PC-9 (cell line): ENCODE measurements at regions of chr11 and their contacts with region 1.

Region 1: DNA sequence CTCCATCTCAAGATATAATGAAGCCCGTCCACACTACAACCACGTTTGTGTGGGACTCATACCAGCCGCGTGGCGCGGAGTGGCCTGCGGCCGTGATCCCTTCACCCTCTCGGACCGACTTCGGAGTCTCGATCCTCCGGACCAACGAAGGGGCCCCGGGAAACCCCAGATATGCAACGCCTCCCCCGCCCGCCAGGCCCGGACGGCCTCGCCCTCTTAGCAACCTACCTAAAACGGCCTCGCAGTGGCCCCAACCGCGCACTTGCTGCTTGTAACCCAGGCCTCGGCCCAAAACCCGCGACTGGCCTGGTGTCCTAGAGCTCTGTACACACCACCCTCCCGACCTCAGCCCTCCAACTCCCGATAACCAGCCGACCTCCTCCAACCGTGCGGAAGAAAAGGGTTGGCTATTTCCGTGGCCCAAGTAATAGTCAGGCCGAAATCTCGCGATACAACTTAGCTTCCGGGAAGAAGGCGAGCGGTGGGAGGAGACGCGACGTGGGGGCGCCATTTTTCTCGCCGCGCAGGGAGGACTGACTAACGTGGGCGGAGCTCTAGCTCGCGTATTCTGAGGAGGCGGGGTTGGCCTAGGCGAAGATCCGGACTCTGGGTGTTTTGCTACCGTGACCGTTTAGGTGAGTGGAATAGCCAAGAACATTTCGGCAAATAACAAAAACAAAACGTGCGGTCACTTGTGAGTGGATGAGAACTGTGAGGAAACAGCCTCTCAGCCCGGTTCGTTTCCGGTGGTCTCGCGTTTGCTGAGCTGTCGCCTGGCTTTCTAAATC is at the starts of genes C11orf54 and TAF1D:
- DNase-seq: peak; percentile 95 to 98
- H3K4me3 ChIP-seq: peak within 1 kb of the TSS; percentile 81
- H3K27ac ChIP-seq: peak within 1 kb of the TSS; percentile 99
- H3K4me1 ChIP-seq: peaks cover 34% of the 10 kb centered on the region
- H3K27me3 ChIP-seq: no peaks in the 10 kb centered on the region
- CTCF ChIP-seq: no peak
- total RNA-seq, gene C11orf54: 35.6 and 37.2 TPM in 2 replicates
- total RNA-seq, gene TAF1D: 158 and 167 TPM in 2 replicates

Region 2: DNA sequence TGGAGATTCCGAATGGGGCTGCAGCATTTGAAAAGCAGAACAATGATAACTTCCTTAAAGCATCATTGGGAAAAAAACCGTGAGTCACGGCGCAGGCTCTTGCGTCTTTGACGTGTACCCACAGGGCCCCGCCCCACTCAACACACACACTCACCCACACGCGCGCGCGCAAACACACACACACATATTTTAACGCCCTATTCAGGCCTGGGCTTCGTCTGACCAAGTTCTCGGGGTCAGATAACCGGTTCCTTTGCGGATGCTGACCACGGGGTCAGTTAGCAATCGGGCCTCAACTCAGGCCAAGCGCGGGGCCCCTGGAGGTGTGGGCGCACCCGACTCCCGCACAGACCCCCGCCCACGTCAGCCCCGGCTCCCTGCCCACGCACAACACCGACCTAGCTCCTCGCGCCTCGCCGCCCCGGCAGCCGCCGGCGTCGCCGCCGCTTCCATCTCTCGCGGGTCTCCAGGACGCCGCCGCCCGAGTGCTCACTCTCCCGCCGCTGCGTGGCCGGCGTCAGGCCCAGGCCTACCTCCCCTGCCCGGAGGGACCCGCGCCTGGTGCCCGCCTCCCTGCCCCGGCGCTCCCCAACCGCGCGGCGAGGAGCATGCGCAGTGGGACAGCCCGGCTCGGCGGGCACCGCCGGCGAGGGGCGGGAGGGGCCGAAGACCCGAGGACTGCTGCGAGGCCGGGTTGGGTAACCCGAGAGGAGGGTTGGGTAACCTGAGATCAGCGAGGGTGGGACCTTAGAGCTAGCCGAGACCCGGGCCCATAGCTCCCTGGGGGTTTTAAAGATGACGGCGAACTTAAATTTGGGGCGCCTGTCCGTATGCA is 543.7 kb before region 1 on chr11 and contains the start of gene SLC36A4:
- CTCF ChIA-PET with region 1: no interaction called
- POLR2A ChIA-PET with region 1: interaction called, 14 read pairs
- intact Hi-C with region 1: no loop called
- DNase-seq: peak; percentile 82 to 91
- H3K4me3 ChIP-seq: peak within 1 kb of the TSS; percentile 68
- H3K27ac ChIP-seq: peak within 1 kb of the TSS; percentile 73
- H3K4me1 ChIP-seq: peaks cover 8% of the 10 kb centered on the region
- H3K27me3 ChIP-seq: no peaks in the 10 kb centered on the region
- CTCF ChIP-seq: no peak
- total RNA-seq, gene SLC36A4: 17.7 and 18.2 TPM in 2 replicates

Region 3: GRCh38 chr11:93662177-93662575 is 79.1 kb before region 1 on chr11:
- CTCF ChIA-PET with region 1: no interaction called
- POLR2A ChIA-PET with region 1: interaction called, 11 read pairs
- intact Hi-C with region 1: no loop called
- DNase-seq: no peak
- H3K4me3 ChIP-seq: peak overlapping the region; percentile 87
- H3K27ac ChIP-seq: peak overlapping the region; percentile 66
- H3K4me1 ChIP-seq: peaks cover 13% of the 10 kb centered on the region
- H3K27me3 ChIP-seq: no peaks in the 10 kb centered on the region
- CTCF ChIP-seq: no peak

Region 4: GRCh38 chr11:93765551-93765950 is 24.3 kb after region 1 on chr11:
- CTCF ChIA-PET with region 1: no interaction called
- POLR2A ChIA-PET with region 1: interaction called, 25 read pairs
- intact Hi-C with region 1: no loop called
- DNase-seq: no peak
- H3K4me3 ChIP-seq: no peak overlapping the region
- H3K27ac ChIP-seq: no peak overlapping the region
- H3K4me1 ChIP-seq: peaks cover 12% of the 10 kb centered on the region; the same call in 1 of the 2 replicates
- H3K27me3 ChIP-seq: no peaks in the 10 kb centered on the region
- CTCF ChIP-seq: no peak

Region 5: DNA sequence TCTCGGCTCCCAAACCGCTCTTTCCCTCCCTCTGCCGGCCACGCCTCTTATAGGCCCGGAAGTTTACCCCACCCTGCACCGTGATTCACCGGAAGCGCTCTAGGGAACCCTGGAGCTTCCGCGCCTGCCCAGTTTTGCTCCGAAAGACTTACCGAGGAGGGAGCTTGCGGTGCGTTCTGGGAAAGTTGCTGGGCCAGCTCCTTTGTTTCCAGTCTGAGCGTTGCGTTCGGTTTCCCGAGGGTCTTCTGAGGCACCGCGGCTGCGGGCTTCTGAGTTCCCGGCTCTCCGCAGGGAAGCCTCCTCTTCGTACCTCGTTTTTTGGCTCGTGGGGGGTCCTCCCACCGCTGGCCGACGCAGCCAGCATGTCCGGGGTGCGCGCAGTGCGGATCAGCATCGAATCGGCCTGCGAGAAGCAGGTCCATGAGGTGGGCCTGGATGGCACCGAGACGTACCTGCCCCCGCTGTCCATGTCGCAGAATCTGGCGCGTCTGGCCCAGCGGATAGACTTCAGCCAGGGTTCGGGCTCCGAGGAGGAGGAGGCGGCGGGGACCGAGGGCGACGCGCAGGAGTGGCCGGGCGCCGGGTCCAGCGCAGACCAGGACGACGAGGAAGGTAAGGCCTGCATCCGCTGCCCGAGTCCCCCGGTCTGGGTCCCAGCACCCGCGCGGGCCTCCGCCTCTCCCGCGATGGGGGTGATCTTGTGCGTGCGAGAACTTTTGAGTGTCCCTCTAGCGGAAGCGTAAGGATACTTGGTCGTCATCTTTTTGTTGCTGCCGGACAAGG is 43.1 kb after region 1 on chr11 and contains the start of gene MED17:
- CTCF ChIA-PET with region 1: interaction called, 9 read pairs
- POLR2A ChIA-PET with region 1: interaction called, 13 read pairs
- intact Hi-C with region 1: loop called (anchors 1 kb)
- DNase-seq: peak; percentile 85 to 90
- H3K4me3 ChIP-seq: peak within 1 kb of the TSS; percentile 91
- H3K27ac ChIP-seq: peak within 1 kb of the TSS; percentile 82
- H3K4me1 ChIP-seq: peaks cover 30% of the 10 kb centered on the region
- H3K27me3 ChIP-seq: no peaks in the 10 kb centered on the region
- CTCF ChIP-seq: peak; percentile 53; the same call in 1 of the 2 replicates
- total RNA-seq, gene MED17: 26.9 and 37.4 TPM in 2 replicates

Region 6: GRCh38 chr11:93842461-93842860 is 101.2 kb after region 1 on chr11:
- CTCF ChIA-PET with region 1: no interaction called
- POLR2A ChIA-PET with region 1: no interaction called
- intact Hi-C with region 1: loop called (anchors 2 kb)
- DNase-seq: peak; percentile 90 to 91
- H3K4me3 ChIP-seq: no peak overlapping the region
- H3K27ac ChIP-seq: no peak overlapping the region
- H3K4me1 ChIP-seq: peaks cover 10% of the 10 kb centered on the region
- H3K27me3 ChIP-seq: no peaks in the 10 kb centered on the region
- CTCF ChIP-seq: no peak

Region 7: GRCh38 chr11:94128746-94129511 is 387.6 kb after region 1 on chr11 and contains the start of gene PANX1:
- CTCF ChIA-PET with region 1: no interaction called
- POLR2A ChIA-PET with region 1: interaction called, 30 read pairs
- intact Hi-C with region 1: no loop called
- DNase-seq: peak; percentile 79 to 80
- H3K4me3 ChIP-seq: peak within 1 kb of the TSS; percentile 92
- H3K27ac ChIP-seq: peak within 1 kb of the TSS; percentile 86
- H3K4me1 ChIP-seq: peaks cover 52% of the 10 kb centered on the region
- H3K27me3 ChIP-seq: no peaks in the 10 kb centered on the region
- CTCF ChIP-seq: no peak
- total RNA-seq, gene PANX1: 10.5 and 12.6 TPM in 2 replicates